ENCODE measurements at regions of chr19 and their contacts with region 1.

Region 1: DNA sequence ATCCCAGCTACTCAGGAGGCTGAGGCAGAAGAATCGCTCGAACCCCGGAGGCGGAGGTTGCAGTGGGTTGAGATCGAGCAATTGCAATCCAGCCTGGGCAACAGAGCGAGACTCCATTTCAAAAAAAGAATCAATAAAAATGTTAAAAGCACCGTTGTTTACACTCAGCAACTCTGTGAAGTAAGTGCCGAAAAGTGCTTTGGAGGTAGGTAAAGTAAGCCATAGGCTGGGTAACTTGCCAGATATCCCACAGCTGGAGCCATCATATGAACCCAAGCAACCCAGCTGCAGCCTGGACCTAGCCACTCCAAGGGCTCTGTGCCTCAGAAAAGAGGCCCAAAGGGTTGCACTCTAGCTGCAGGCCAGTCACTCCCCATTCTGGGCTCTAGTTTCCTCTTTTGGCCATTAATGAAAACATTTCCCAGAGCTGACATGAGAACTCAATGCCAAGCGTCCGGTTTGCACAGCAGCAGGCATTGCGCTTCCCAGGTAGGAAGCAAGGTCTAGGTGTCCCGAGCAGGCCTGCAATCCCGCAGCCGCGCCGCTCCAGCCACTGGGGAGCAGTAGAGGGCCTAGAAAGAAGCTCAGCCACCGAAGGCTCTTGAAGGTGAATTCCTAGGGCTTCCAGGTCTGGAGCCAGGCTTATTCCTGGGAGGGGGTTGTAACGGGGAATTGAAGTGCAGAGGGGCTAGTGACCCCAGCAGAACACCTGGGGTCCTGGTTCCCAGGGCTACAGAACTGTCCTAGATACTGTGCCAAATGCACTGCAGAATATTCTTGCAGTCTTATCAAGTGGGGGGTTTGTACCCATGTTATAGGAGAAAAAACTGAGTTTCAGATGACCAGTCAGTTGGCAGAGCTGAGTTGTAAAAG is 4.1 kb upstream of the CD79A start:
- DNase-seq: no peak
- ATAC-seq: peak; percentile 11; the same call in 2 of the 3 replicates
- H3K4me3 ChIP-seq: no peak overlapping the region
- H3K27ac ChIP-seq: peak overlapping the region; percentile 72
- H3K4me1 ChIP-seq: peaks cover 77% of the 10 kb centered on the region
- H3K27me3 ChIP-seq: no peaks in the 10 kb centered on the region
- CTCF ChIP-seq: peak; percentile 85 to 90 (median 88)
- EP300 ChIP-seq: no peak
- POLR2A ChIP-seq: peak; percentile 71
- RAD21 ChIP-seq: peak; percentile 87

Region 2: GRCh38 chr19:41641879-41642485 is 231.0 kb before region 1 on chr19:
- CTCF ChIA-PET with region 1: no interaction called
- POLR2A ChIA-PET with region 1: no interaction called
- RAD21 ChIA-PET with region 1: no interaction called
- SMC1A ChIA-PET with region 1: no interaction called
- in situ Hi-C with region 1: no loop called
- intact Hi-C with region 1: no loop called
- DNase-seq: peak; percentile 4
- ATAC-seq: peak; percentile 88
- H3K4me3 ChIP-seq: no peak overlapping the region
- H3K27ac ChIP-seq: no peak overlapping the region
- H3K4me1 ChIP-seq: no peaks in the 10 kb centered on the region
- H3K27me3 ChIP-seq: no peaks in the 10 kb centered on the region; a peak in 2 of 4 replicates
- CTCF ChIP-seq: peak; percentile 86 to 94 (median 93)
- EP300 ChIP-seq: no peak
- POLR2A ChIP-seq: no peak
- RAD21 ChIP-seq: peak; percentile 82

Region 3: GRCh38 chr19:41811036-41811435 is 62.0 kb before region 1 on chr19:
- CTCF ChIA-PET with region 1: no interaction called
- POLR2A ChIA-PET with region 1: no interaction called
- RAD21 ChIA-PET with region 1: no interaction called
- SMC1A ChIA-PET with region 1: no interaction called
- in situ Hi-C with region 1: no loop called
- intact Hi-C with region 1: no loop called
- DNase-seq: no peak
- ATAC-seq: peak; percentile 45
- H3K4me3 ChIP-seq: no peak overlapping the region
- H3K27ac ChIP-seq: no peak overlapping the region
- H3K4me1 ChIP-seq: peaks cover 5% of the 10 kb centered on the region
- H3K27me3 ChIP-seq: no peaks in the 10 kb centered on the region; a peak in 1 of 4 replicates
- CTCF ChIP-seq: no peak
- EP300 ChIP-seq: no peak
- POLR2A ChIP-seq: no peak
- RAD21 ChIP-seq: no peak

Region 4: GRCh38 chr19:41883821-41884733 is 11.1 kb after region 1 on chr19:
- CTCF ChIA-PET with region 1: interaction called, 136 read pairs
- POLR2A ChIA-PET with region 1: interaction called, 90 read pairs
- RAD21 ChIA-PET with region 1: interaction called, 120 read pairs
- SMC1A ChIA-PET with region 1: interaction called, 37 read pairs
- in situ Hi-C with region 1: no loop called
- intact Hi-C with region 1: no loop called
- DNase-seq: peak; percentile 86
- ATAC-seq: peak; percentile 87
- H3K4me3 ChIP-seq: peak overlapping the region; percentile 89
- H3K27ac ChIP-seq: peak overlapping the region; percentile 87
- H3K4me1 ChIP-seq: peaks cover 30% of the 10 kb centered on the region
- H3K27me3 ChIP-seq: no peaks in the 10 kb centered on the region
- CTCF ChIP-seq: 0 out of 6 replicates have a peak, but pooled peaks of 1 of the 3 experiments have one; percentile 7
- EP300 ChIP-seq: no peak; a peak in 1 of 4 replicates
- POLR2A ChIP-seq: peak; percentile 92
- RAD21 ChIP-seq: no peak

Region 5: GRCh38 chr19:41912899-41913537 is 40.0 kb after region 1 on chr19:
- CTCF ChIA-PET with region 1: no interaction called
- POLR2A ChIA-PET with region 1: no interaction called
- RAD21 ChIA-PET with region 1: no interaction called
- SMC1A ChIA-PET with region 1: no interaction called
- in situ Hi-C with region 1: no loop called
- intact Hi-C with region 1: no loop called
- DNase-seq: no peak
- ATAC-seq: peak; percentile 47
- H3K4me3 ChIP-seq: no peak overlapping the region
- H3K27ac ChIP-seq: no peak overlapping the region
- H3K4me1 ChIP-seq: no peaks in the 10 kb centered on the region
- H3K27me3 ChIP-seq: peaks cover 3 to 4% of the 10 kb centered on the region in 2 experiments; a peak in 3 of 4 replicates
- CTCF ChIP-seq: no peak
- EP300 ChIP-seq: no peak
- POLR2A ChIP-seq: no peak
- RAD21 ChIP-seq: no peak

Region 6: GRCh38 chr19:41934849-41935374 is 61.9 kb after region 1 on chr19:
- CTCF ChIA-PET with region 1: interaction called, 98 read pairs
- POLR2A ChIA-PET with region 1: interaction called, 8 read pairs
- RAD21 ChIA-PET with region 1: interaction called, 9 read pairs
- SMC1A ChIA-PET with region 1: interaction called, 13 read pairs
- in situ Hi-C with region 1: no loop called
- intact Hi-C with region 1: loop called (anchors 1 kb)
- DNase-seq: no peak
- ATAC-seq: peak; percentile 93
- H3K4me3 ChIP-seq: no peak overlapping the region
- H3K27ac ChIP-seq: no peak overlapping the region
- H3K4me1 ChIP-seq: peaks cover 23% of the 10 kb centered on the region
- H3K27me3 ChIP-seq: peaks cover 0 to 6% of the 10 kb centered on the region in 2 experiments
- CTCF ChIP-seq: peak; percentile 92 to 97 (median 94); a peak in 5 of 6 replicates
- EP300 ChIP-seq: no peak
- POLR2A ChIP-seq: no peak
- RAD21 ChIP-seq: peak; percentile 94

Region 7: DNA sequence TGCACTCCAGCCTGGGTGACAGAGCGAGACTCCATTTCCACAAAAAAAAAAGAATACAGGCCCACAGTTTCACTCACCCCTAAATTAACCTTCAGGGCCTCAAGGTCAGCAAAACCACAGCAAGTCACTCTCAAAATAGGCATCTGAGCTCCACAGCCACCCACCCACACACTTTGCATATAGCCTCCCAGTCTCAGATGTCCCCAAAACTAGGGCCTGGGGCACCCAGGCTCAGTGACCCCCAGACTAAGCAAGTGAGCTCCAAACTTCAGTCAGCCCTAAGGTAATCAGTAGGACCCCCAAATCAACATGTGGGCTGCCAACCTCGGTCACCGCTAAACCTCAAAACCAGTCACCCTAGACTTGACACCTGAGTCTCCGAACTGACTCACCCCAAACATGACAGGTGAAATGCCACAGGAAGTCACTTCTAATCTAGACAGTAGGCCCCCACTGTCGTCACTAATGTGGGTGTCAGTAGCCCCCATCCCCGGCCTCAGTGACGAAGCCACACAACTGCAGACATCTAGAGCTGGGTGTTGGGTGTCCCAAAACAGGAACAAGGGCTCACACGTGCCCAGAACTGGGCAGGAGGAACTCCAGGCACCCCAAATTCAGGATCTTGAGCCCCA is 72.2 kb after region 1 on chr19:
- CTCF ChIA-PET with region 1: interaction called, 98 read pairs
- POLR2A ChIA-PET with region 1: interaction called, 16 read pairs
- RAD21 ChIA-PET with region 1: interaction called, 18 read pairs
- SMC1A ChIA-PET with region 1: interaction called, 57 read pairs
- in situ Hi-C with region 1: loop called (anchors 5 kb)
- intact Hi-C with region 1: loop called (anchors 2 kb)
- DNase-seq: peak; percentile 94
- ATAC-seq: peak; percentile 86
- H3K4me3 ChIP-seq: no peak overlapping the region; the same call in 1 of the 2 replicates
- H3K27ac ChIP-seq: peak overlapping the region; percentile 85
- H3K4me1 ChIP-seq: peaks cover 47% of the 10 kb centered on the region
- H3K27me3 ChIP-seq: no peaks in the 10 kb centered on the region
- CTCF ChIP-seq: no peak
- EP300 ChIP-seq: peak; percentile 96 to 98
- POLR2A ChIP-seq: peak; percentile 54
- RAD21 ChIP-seq: peak; percentile 6; the same call in 1 of the 2 replicates

Region 8: DNA sequence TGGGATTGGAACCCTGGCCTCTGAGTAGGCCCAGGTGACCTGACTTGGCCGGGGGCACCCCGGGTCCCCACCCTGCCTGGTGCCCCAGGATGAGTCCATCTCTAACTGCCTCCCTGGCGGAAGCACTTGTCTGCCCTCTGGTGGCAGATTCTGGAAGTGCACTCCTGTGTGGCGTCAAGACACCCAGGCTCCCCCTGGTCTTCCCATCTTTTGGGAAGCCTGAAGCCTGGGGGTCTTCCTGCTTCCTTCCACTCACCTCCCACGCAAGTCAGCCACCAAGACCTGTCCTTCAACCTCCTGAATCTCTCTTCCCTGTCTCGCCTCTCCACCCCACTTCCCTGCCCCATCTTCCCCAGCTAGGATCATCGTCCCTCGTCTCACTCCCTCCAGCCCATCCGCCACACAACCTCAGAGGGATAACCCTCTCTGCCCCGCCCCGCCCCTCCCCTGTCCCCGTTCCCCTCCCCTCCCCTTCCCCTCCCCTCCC is 78.7 kb after region 1 on chr19:
- CTCF ChIA-PET with region 1: interaction called, 98 read pairs
- POLR2A ChIA-PET with region 1: interaction called, 16 read pairs
- RAD21 ChIA-PET with region 1: interaction called, 13 read pairs
- SMC1A ChIA-PET with region 1: interaction called, 57 read pairs
- in situ Hi-C with region 1: loop called (anchors 5 kb)
- intact Hi-C with region 1: loop called (anchors 1 kb)
- DNase-seq: no peak
- ATAC-seq: peak; percentile 96
- H3K4me3 ChIP-seq: no peak overlapping the region
- H3K27ac ChIP-seq: no peak overlapping the region
- H3K4me1 ChIP-seq: peaks cover 8% of the 10 kb centered on the region
- H3K27me3 ChIP-seq: no peaks in the 10 kb centered on the region
- CTCF ChIP-seq: peak; percentile 96 to 99 (median 97)
- EP300 ChIP-seq: no peak
- POLR2A ChIP-seq: no peak
- RAD21 ChIP-seq: peak; percentile 97

Region 9: GRCh38 chr19:41959056-41960053 is 86.3 kb after region 1 on chr19 and contains the start of gene RABAC1:
- CTCF ChIA-PET with region 1: interaction called, 23 read pairs
- POLR2A ChIA-PET with region 1: interaction called, 4 read pairs
- RAD21 ChIA-PET with region 1: interaction called, 8 read pairs
- SMC1A ChIA-PET with region 1: interaction called, 12 read pairs
- in situ Hi-C with region 1: no loop called
- intact Hi-C with region 1: no loop called
- DNase-seq: peak; percentile 36
- ATAC-seq: peak; percentile 94
- H3K4me3 ChIP-seq: peak within 1 kb of the TSS; percentile 89
- H3K27ac ChIP-seq: peak within 1 kb of the TSS; percentile 72
- H3K4me1 ChIP-seq: peaks cover 12% of the 10 kb centered on the region
- H3K27me3 ChIP-seq: no peaks in the 10 kb centered on the region
- CTCF ChIP-seq: peak; percentile 29 to 57 (median 49); a peak in 5 of 6 replicates
- EP300 ChIP-seq: no peak
- POLR2A ChIP-seq: peak; percentile 60; the same call in 1 of the 2 replicates
- RAD21 ChIP-seq: peak; percentile 14; the same call in 1 of the 2 replicates
- polyA plus RNA-seq, gene RABAC1: 10.9 to 27.3 TPM